CD14-positive monocyte (primary cell): ENCODE measurements at regions of chr16 and their contacts with region 1.

Region 1: GRCh38 chr16:55701442-55702319 is 45.9 kb downstream of the SLC6A2 start:
- DNase-seq: peak; percentile 38 to 53 (median 41)
- H3K4me3 ChIP-seq: no peak overlapping the region
- H3K4me3 Mint-ChIP-seq: no peak overlapping the region
- H3K27ac ChIP-seq: no peak overlapping the region
- H3K27ac Mint-ChIP-seq: peak overlapping the region in 1 of 7 donors; percentile 2
- H3K4me1 ChIP-seq: no peaks in the 10 kb centered on the region
- H3K4me1 Mint-ChIP-seq: peaks cover 4% of the 10 kb centered on the region
- H3K27me3 ChIP-seq: no peaks in the 10 kb centered on the region
- H3K27me3 Mint-ChIP-seq: peaks cover 4 to 10% (median 8%) of the 10 kb centered on the region in 3 donors
- CTCF ChIP-seq: peak; percentile 80

Region 2: GRCh38 chr16:53945996-53946395 is 1755.7 kb before region 1 on chr16:
- intact Hi-C with region 1: loop called in 1 of 2 experiments (anchors 10 kb)
- DNase-seq: peak; percentile 31 to 34 (median 34)
- H3K4me3 ChIP-seq: no peak overlapping the region
- H3K4me3 Mint-ChIP-seq: no peak overlapping the region
- H3K27ac ChIP-seq: no peak overlapping the region
- H3K27ac Mint-ChIP-seq: no peak overlapping the region
- H3K4me1 ChIP-seq: peaks cover 7 to 9% of the 10 kb centered on the region in 2 donors
- H3K4me1 Mint-ChIP-seq: peaks cover 14% of the 10 kb centered on the region
- H3K27me3 ChIP-seq: no peaks in the 10 kb centered on the region
- H3K27me3 Mint-ChIP-seq: peaks cover 0 to 1% (median 0%) of the 10 kb centered on the region in 3 donors
- CTCF ChIP-seq: peak; percentile 83

Region 3: DNA sequence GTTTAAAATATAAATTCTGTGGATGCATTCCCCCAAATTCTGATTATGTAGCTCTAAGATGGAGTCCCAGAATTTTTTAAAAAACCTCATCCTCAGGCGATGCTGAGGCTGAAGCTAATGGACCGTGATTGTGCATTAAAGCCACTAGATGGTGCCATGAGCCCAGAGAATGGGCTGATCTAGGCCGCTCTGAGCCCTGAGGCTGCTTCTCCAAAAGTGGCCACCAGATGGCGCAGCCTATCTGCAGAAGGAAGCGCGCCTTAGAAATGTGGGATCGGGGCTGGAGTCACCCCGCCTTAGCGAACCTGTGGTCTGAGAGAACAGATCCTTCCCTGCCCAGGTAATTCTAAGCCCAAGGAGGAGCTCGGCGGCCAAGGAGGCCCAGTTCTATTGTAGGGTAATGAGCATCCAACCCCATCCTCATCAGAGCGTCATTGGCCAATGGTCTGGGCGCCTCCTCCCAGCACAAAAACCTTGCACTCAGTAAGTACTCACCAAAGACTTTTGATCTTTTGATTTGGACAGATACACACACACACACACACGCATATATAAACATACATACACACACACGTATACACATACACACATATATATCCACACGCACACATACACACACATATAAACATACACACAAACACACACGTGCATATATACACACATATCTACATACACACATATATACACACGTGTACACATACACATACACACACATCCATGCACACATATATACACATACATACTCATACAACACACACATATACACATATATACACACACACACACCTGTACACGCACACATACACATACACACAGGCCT is 236.4 kb before region 1 on chr16:
- intact Hi-C with region 1: loop called (anchors 1 to 2 kb)
- DNase-seq: peak; percentile 86 to 91 (median 89)
- H3K4me3 ChIP-seq: no peak overlapping the region
- H3K4me3 Mint-ChIP-seq: no peak overlapping the region
- H3K27ac ChIP-seq: no peak overlapping the region
- H3K27ac Mint-ChIP-seq: peak overlapping the region in 1 of 7 donors; percentile 55
- H3K4me1 ChIP-seq: peaks cover 0 to 3% of the 10 kb centered on the region in 2 donors
- H3K4me1 Mint-ChIP-seq: peaks cover 11% of the 10 kb centered on the region
- H3K27me3 ChIP-seq: no peaks in the 10 kb centered on the region
- H3K27me3 Mint-ChIP-seq: peaks cover 0 to 4% (median 2%) of the 10 kb centered on the region in 3 donors
- CTCF ChIP-seq: peak; percentile 100

Region 4: GRCh38 chr16:55494994-55495421 is 206.7 kb before region 1 on chr16:
- intact Hi-C with region 1: loop called in 1 of 2 experiments (anchors 10 kb)
- DNase-seq: peak; percentile 55 to 66 (median 61)
- H3K4me3 ChIP-seq: no peak overlapping the region
- H3K4me3 Mint-ChIP-seq: no peak overlapping the region
- H3K27ac ChIP-seq: no peak overlapping the region
- H3K27ac Mint-ChIP-seq: no peak overlapping the region
- H3K4me1 ChIP-seq: peaks cover under 1 to 6% of the 10 kb centered on the region in 2 donors
- H3K4me1 Mint-ChIP-seq: peaks cover 9% of the 10 kb centered on the region
- H3K27me3 ChIP-seq: peaks cover 0 to 3% of the 10 kb centered on the region in 2 donors
- H3K27me3 Mint-ChIP-seq: peaks cover 0 to 6% (median 3%) of the 10 kb centered on the region in 3 donors
- CTCF ChIP-seq: peak; percentile 44